ENCODE measurements at regions of chr11 and their contacts with region 1.

Region 1: GRCh38 chr11:120424970-120425332 is 86.6 kb upstream of the GRIK4 start:
- DNase-seq: no peak
- H3K4me3 Mint-ChIP-seq: peak overlapping the region; percentile 53
- H3K27ac Mint-ChIP-seq: no peak overlapping the region
- H3K4me1 Mint-ChIP-seq: peaks cover 12% of the 10 kb centered on the region
- H3K27me3 Mint-ChIP-seq: no peaks in the 10 kb centered on the region
- CTCF ChIP-seq: no peak

Region 2: DNA sequence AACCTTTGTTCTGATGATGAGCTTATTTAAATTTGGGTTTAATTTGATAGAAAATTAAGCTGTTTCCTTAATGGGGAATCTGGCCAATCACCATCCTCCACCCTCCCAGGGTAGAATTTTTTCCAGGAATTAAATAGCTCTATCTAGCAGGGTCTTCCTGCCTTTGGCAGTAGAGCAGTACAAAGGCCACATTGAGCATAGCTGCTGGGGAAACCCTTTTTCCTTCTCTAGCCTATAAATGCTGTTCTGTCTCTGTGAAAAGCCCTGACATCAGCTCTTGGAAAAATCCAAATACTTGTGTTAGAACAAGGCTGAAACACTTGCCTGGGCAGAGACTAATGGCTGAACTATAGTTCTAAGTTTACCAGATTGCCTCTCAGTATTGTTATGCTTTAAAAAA is 33.7 kb before region 1 on chr11:
- CTCF ChIA-PET with region 1: no interaction called
- intact Hi-C with region 1: loop called (anchors 5 kb)
- DNase-seq: peak; percentile 9
- H3K4me3 Mint-ChIP-seq: no peak overlapping the region
- H3K27ac Mint-ChIP-seq: no peak overlapping the region
- H3K4me1 Mint-ChIP-seq: peaks cover 32% of the 10 kb centered on the region
- H3K27me3 Mint-ChIP-seq: no peaks in the 10 kb centered on the region
- CTCF ChIP-seq: no peak

Measured in Calu3 (cell line).